ENCODE measurements at regions of chr2 and their contacts with region 1.

Region 1: GRCh38 chr2:75640621-75641121 is 5.9 kb upstream of the MRPL19 start:
- DNase-seq: no peak
- ATAC-seq: peak; percentile 99
- H3K4me3 ChIP-seq: no peak overlapping the region
- H3K27ac ChIP-seq: no peak overlapping the region
- H3K4me1 ChIP-seq: no peaks in the 10 kb centered on the region
- H3K27me3 ChIP-seq: no peaks in the 10 kb centered on the region; a peak in 1 of 4 replicates
- CTCF ChIP-seq: peak; percentile 98 to 100 (median 99); a peak in 5 of 6 replicates
- EP300 ChIP-seq: no peak
- POLR2A ChIP-seq: no peak
- RAD21 ChIP-seq: peak; percentile 95

Region 2: DNA sequence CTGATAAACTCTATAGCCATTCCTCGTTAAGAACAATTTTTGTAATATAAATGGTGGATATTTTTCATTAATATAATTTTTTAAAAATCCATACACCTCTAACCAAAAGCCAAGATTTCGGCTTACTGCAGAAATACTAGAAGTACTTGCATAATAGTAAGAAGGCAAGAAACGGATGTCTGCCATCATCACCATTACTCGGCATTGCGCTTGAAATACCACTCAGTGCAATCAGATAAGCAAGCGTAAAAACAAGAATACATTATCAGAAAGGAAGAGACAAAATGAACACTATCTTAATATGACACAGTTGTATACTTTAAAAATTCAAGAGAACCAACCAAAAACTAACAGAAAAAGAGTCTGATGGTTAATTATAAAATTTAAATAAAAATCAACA is 1477.7 kb before region 1 on chr2:
- CTCF ChIA-PET with region 1: no interaction called
- POLR2A ChIA-PET with region 1: no interaction called
- RAD21 ChIA-PET with region 1: no interaction called
- SMC1A ChIA-PET with region 1: no interaction called
- in situ Hi-C with region 1: no loop called
- intact Hi-C with region 1: no loop called
- DNase-seq: no peak
- ATAC-seq: no peak
- H3K4me3 ChIP-seq: no peak overlapping the region
- H3K27ac ChIP-seq: no peak overlapping the region
- H3K4me1 ChIP-seq: no peaks in the 10 kb centered on the region
- H3K27me3 ChIP-seq: no peaks in the 10 kb centered on the region
- CTCF ChIP-seq: no peak
- EP300 ChIP-seq: no peak
- POLR2A ChIP-seq: no peak
- RAD21 ChIP-seq: no peak

Region 3: DNA sequence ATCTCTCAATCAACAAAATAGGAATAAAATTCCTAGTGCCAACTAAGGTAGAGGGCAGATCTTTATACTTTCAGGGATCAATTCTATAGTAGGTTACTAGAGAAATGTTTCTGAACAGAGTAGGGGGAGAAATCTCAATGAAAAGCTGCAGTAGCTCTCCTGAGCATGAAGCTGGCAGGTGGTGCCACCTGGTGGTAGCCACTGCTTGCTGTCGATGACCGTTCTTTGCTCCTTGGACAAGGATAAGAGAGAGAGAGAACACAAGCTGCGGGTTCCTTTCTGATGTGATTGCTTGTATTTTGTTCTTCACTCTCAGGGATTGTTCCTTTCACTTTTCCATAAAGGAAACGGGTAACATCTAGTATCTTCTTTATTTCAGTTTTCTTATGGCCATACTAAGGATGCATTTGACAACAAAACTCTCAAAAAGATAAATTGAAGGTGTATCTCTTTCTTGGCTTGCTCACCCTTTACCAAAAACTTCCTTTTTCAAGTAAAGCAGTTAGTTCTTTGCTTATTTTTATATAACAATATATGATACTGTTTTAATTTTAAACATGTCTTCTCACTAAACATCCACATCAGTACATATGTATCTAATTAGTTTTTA is 12.7 kb before region 1 on chr2:
- CTCF ChIA-PET with region 1: interaction called, 32 read pairs
- POLR2A ChIA-PET with region 1: no interaction called
- RAD21 ChIA-PET with region 1: interaction called, 5 read pairs
- SMC1A ChIA-PET with region 1: interaction called, 7 read pairs
- in situ Hi-C with region 1: no loop called
- intact Hi-C with region 1: no loop called
- DNase-seq: no peak
- ATAC-seq: peak; percentile 96
- H3K4me3 ChIP-seq: no peak overlapping the region
- H3K27ac ChIP-seq: no peak overlapping the region
- H3K4me1 ChIP-seq: no peaks in the 10 kb centered on the region
- H3K27me3 ChIP-seq: peaks cover 0 to 2% of the 10 kb centered on the region in 2 experiments; a peak in 1 of 4 replicates
- CTCF ChIP-seq: peak; percentile 86 to 97 (median 91)
- EP300 ChIP-seq: no peak
- POLR2A ChIP-seq: no peak
- RAD21 ChIP-seq: peak; percentile 80

Region 4: DNA sequence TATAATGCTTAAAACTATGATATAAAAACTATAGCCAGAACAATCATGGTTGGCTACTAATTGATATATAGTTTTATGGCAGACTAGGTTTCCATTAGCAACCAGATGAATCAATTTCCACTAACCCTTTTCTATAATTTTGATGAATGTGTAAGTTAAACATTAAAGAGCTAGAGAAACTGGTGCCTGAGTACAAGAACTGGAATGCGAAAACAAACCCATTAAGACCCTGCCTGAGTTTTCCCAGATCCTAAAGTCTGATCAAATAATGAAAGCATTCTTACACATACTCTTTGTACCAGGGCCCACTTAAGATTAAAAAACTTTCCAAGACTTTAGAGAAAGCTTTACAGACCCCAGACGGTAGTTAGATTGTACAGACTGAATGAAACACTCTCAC is 27.2 kb after region 1 on chr2:
- CTCF ChIA-PET with region 1: interaction called, 29 read pairs
- POLR2A ChIA-PET with region 1: no interaction called
- RAD21 ChIA-PET with region 1: no interaction called
- SMC1A ChIA-PET with region 1: interaction called, 9 read pairs
- in situ Hi-C with region 1: no loop called
- intact Hi-C with region 1: no loop called
- DNase-seq: no peak
- ATAC-seq: no peak
- H3K4me3 ChIP-seq: no peak overlapping the region
- H3K27ac ChIP-seq: no peak overlapping the region
- H3K4me1 ChIP-seq: no peaks in the 10 kb centered on the region
- H3K27me3 ChIP-seq: no peaks in the 10 kb centered on the region
- CTCF ChIP-seq: no peak
- EP300 ChIP-seq: no peak
- POLR2A ChIP-seq: no peak
- RAD21 ChIP-seq: no peak

Region 5: DNA sequence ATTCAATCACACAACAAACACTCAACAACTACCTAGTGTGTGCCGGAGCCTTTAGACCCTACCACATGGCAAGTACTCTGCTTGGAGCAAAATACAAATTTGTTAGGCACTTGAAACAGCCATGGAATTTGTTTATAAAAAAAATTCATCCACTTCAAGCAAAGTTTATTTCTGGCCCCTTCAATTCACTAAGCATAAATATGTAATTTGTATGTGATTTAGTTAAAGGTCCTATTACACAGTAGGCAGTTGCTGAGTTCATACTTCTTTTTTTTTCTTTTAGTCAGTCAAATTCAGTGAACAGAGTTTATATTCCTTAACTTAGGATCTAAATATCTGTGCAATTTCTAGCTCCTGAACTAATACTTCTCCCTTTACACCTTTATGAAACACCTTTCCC is 47.5 kb after region 1 on chr2:
- CTCF ChIA-PET with region 1: interaction called, 150 read pairs
- POLR2A ChIA-PET with region 1: no interaction called
- RAD21 ChIA-PET with region 1: no interaction called
- SMC1A ChIA-PET with region 1: no interaction called
- in situ Hi-C with region 1: no loop called
- intact Hi-C with region 1: no loop called
- DNase-seq: no peak
- ATAC-seq: no peak
- H3K4me3 ChIP-seq: no peak overlapping the region
- H3K27ac ChIP-seq: no peak overlapping the region
- H3K4me1 ChIP-seq: no peaks in the 10 kb centered on the region
- H3K27me3 ChIP-seq: no peaks in the 10 kb centered on the region
- CTCF ChIP-seq: no peak
- EP300 ChIP-seq: no peak
- POLR2A ChIP-seq: no peak
- RAD21 ChIP-seq: no peak

Region 6: DNA sequence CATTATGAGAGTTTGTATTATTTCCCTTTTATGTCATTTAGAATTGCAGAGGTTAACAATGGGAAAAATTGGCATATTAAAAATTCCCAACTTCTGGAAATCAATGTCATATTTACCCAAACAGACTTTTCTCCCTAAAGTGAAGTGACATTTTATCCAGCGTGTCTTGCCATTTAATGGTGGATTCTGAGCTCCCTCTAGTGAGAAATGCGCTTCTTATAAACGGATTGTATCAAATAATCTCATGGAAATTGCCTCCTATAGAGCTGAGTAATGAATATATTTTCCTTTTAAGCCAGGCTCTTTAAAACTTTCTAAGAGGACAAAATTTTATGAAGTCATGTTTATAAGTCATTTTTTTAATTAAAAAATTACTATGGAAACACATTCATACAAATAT is 75.7 kb after region 1 on chr2:
- CTCF ChIA-PET with region 1: interaction called, 20 read pairs
- POLR2A ChIA-PET with region 1: no interaction called
- RAD21 ChIA-PET with region 1: interaction called, 5 read pairs
- SMC1A ChIA-PET with region 1: interaction called, 4 read pairs
- in situ Hi-C with region 1: no loop called
- intact Hi-C with region 1: no loop called
- DNase-seq: no peak
- ATAC-seq: no peak
- H3K4me3 ChIP-seq: no peak overlapping the region
- H3K27ac ChIP-seq: no peak overlapping the region
- H3K4me1 ChIP-seq: peaks cover under 1% of the 10 kb centered on the region; the same call in 1 of the 2 replicates
- H3K27me3 ChIP-seq: no peaks in the 10 kb centered on the region
- CTCF ChIP-seq: no peak; a peak in 1 of 6 replicates
- EP300 ChIP-seq: no peak
- POLR2A ChIP-seq: no peak
- RAD21 ChIP-seq: 0 out of 2 replicates have a peak, but pooled peaks have one; percentile 8

Region 7: GRCh38 chr2:76599732-76600368 is 959.2 kb after region 1 on chr2:
- CTCF ChIA-PET with region 1: interaction called, 7 read pairs
- POLR2A ChIA-PET with region 1: no interaction called
- RAD21 ChIA-PET with region 1: interaction called, 5 read pairs
- SMC1A ChIA-PET with region 1: no interaction called
- in situ Hi-C with region 1: no loop called
- intact Hi-C with region 1: loop called (anchors 2 kb)
- DNase-seq: peak; percentile 43
- ATAC-seq: peak; percentile 100
- H3K4me3 ChIP-seq: no peak overlapping the region
- H3K27ac ChIP-seq: no peak overlapping the region
- H3K4me1 ChIP-seq: no peaks in the 10 kb centered on the region
- H3K27me3 ChIP-seq: no peaks in the 10 kb centered on the region
- CTCF ChIP-seq: peak; percentile 77 to 93 (median 84)
- EP300 ChIP-seq: no peak
- POLR2A ChIP-seq: no peak
- RAD21 ChIP-seq: peak; percentile 89